Calu3 (cell line): ENCODE measurements at regions of chr10 and their contacts with region 1.

Region 1: GRCh38 chr10:68600041-68600778 is 40.1 kb downstream of the TET1 start:
- DNase-seq: peak; percentile 71
- H3K4me3 Mint-ChIP-seq: peak overlapping the region; percentile 86
- H3K27ac Mint-ChIP-seq: peak overlapping the region; percentile 69
- H3K4me1 Mint-ChIP-seq: peaks cover 24% of the 10 kb centered on the region
- H3K27me3 Mint-ChIP-seq: no peaks in the 10 kb centered on the region
- CTCF ChIP-seq: no peak

Region 2: DNA sequence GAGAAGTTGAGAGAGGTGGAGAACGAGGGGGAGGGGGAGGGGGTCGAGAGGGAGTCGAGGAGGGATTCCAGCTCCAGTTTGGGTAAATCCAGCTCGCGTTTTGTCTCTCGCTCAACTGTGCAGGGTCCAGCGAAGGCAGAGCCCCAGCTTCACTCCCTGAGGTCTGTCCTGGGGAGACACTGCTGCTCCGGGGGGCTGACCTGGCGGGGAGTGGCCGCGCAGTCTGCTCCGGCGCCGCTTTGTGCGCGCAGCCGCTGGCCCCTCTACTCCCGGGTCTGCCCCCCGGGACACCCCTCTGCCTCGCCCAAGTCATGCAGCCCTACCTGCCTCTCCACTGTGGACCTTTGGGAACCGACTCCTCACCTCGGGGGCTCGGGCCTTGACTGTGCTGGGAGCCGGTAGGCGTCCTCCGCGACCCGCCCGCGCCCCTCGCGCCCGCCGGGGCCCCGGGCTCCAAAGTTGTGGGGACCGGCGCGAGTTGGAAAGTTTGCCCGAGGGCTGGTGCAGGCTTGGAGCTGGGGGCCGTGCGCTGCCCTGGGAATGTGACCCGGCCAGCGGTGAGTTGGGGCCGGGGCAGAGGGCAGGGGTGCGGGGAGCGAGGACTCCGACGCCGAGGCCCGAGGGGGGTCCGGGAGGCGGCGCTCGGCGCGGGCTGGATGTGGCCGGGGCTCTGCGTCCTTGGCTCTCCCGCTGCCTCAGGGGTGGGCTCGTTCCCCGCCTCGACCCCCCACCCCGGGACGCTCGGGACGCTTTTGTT is 39.8 kb before region 1 on chr10 and contains the start of gene TET1:
- CTCF ChIA-PET with region 1: no interaction called
- intact Hi-C with region 1: loop called (anchors 1 kb)
- DNase-seq: peak; percentile 51
- H3K4me3 Mint-ChIP-seq: peak within 1 kb of the TSS; percentile 63
- H3K27ac Mint-ChIP-seq: no peak within 1 kb of the TSS
- H3K4me1 Mint-ChIP-seq: peaks cover 7% of the 10 kb centered on the region
- H3K27me3 Mint-ChIP-seq: peaks cover 28% of the 10 kb centered on the region
- CTCF ChIP-seq: no peak
- total RNA-seq, gene TET1: 1.2 TPM in 2 replicates

Region 3: DNA sequence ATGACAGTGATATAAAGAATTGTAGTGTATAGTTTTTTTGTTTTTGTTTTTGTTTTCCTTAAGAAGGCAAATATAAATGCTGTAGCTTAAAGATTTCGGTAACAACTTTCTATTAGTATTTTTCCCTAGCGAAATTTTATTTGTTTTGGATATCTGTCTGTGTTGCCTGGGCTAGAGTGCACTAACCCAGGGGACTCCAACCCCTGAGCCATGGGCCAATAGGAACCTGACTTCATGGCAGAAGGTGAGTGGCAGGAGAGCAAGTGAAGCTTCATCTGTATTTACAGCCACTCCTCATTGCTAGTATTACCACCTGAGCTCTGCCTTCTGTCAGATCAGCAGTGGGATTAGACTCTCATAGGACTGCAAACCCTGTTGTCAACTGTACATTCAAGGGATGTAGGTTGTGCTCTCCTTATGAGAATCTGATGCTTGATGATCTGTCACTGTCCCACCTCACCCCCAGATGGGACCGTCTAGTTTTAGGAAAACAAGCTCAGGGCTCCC is 55.5 kb after region 1 on chr10:
- CTCF ChIA-PET with region 1: no interaction called
- intact Hi-C with region 1: no loop called
- DNase-seq: no peak
- H3K4me3 Mint-ChIP-seq: no peak overlapping the region
- H3K27ac Mint-ChIP-seq: no peak overlapping the region
- H3K4me1 Mint-ChIP-seq: no peaks in the 10 kb centered on the region
- H3K27me3 Mint-ChIP-seq: no peaks in the 10 kb centered on the region
- CTCF ChIP-seq: no peak

Region 4: DNA sequence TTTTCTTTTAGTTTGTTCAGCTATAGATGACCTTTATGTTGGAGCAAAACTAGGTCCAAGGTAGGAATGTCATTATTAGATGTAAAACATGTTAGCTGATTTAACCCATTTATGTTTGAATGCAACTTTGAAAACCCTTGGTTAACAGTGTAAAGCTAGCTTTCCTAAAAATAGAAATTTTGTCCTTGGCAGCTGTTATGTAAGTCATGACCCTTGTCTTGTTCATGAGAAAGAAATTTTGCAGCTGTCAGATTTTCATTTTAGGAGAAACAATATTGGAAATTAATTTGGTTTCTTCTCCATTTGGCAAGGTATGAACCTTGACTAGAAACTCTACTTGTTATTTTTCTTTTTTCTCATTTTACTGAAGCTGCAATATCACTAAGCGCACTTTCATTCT is 96.9 kb after region 1 on chr10:
- CTCF ChIA-PET with region 1: no interaction called
- intact Hi-C with region 1: no loop called
- DNase-seq: no peak
- H3K4me3 Mint-ChIP-seq: no peak overlapping the region
- H3K27ac Mint-ChIP-seq: no peak overlapping the region
- H3K4me1 Mint-ChIP-seq: no peaks in the 10 kb centered on the region
- H3K27me3 Mint-ChIP-seq: no peaks in the 10 kb centered on the region
- CTCF ChIP-seq: no peak